ENCODE measurements at regions of chr1 and their contacts with region 1.

Region 1: DNA sequence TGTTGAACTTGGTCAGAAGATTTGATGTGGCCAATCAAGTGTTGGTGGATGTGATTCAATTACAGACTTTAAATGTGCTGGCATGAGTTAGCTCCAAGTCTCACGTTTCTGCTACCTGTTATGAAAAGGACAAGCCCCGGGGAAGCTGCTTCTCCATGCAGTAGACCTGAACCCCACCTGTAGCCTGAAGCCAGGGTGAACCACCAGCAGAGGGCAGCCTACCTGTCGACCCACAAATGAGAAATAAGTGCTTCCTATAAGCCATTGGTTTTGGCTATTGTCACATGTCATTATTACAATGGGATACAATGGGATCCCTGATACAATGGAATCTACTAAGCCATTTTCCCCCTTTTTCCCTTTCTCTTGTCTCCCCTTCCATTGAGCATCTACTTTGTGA is 230.2 kb downstream of the PRDM2 start:
- DNase-seq: peak; percentile 27
- ATAC-seq: peak; percentile 46; the same call in 1 of the 2 replicates
- H3K4me3 ChIP-seq: no peak overlapping the region
- H3K27ac ChIP-seq: no peak overlapping the region
- H3K4me1 ChIP-seq: no peaks in the 10 kb centered on the region
- H3K27me3 ChIP-seq: peaks cover 22% of the 10 kb centered on the region
- CTCF ChIP-seq: peak; percentile 63

Region 2: GRCh38 chr1:13828454-13829151 is 101.5 kb before region 1 on chr1:
- CTCF ChIA-PET with region 1: no interaction called
- POLR2A ChIA-PET with region 1: no interaction called
- intact Hi-C with region 1: no loop called
- DNase-seq: peak; percentile 58
- ATAC-seq: peak; percentile 74
- H3K4me3 ChIP-seq: no peak overlapping the region
- H3K27ac ChIP-seq: no peak overlapping the region
- H3K4me1 ChIP-seq: peaks cover 7% of the 10 kb centered on the region
- H3K27me3 ChIP-seq: no peaks in the 10 kb centered on the region
- CTCF ChIP-seq: peak; percentile 78

Region 3: DNA sequence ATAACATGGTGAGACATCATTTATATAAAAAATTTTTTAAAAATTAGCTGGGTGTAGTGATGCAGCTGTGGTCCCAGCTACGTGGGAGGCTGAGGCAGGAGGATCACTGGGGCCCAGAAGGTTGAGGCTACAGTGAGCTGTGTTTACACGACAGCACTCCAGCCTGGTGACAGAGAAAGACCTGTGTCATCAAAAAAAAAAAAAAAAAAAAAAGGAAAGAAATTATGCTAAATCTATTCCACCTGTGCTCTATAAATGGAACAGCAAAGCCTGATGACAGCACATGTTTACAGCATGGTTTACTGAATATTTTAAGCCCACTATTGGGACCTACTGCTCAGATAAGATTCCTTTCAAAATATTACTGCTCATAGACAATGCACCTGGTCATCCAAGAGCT is 12.5 kb before region 1 on chr1:
- CTCF ChIA-PET with region 1: interaction called, 12 read pairs
- POLR2A ChIA-PET with region 1: no interaction called
- intact Hi-C with region 1: no loop called
- DNase-seq: no peak
- ATAC-seq: no peak
- H3K4me3 ChIP-seq: no peak overlapping the region
- H3K27ac ChIP-seq: no peak overlapping the region
- H3K4me1 ChIP-seq: peaks cover 8% of the 10 kb centered on the region; the same call in 1 of the 2 replicates
- H3K27me3 ChIP-seq: peaks cover 30% of the 10 kb centered on the region
- CTCF ChIP-seq: no peak

Region 4: GRCh38 chr1:13967707-13968106 is 37.6 kb after region 1 on chr1:
- CTCF ChIA-PET with region 1: no interaction called
- POLR2A ChIA-PET with region 1: no interaction called
- intact Hi-C with region 1: no loop called
- DNase-seq: no peak
- ATAC-seq: no peak
- H3K4me3 ChIP-seq: no peak overlapping the region
- H3K27ac ChIP-seq: no peak overlapping the region
- H3K4me1 ChIP-seq: 0 out of 2 replicates have a peak, but pooled peaks cover 5% of the 10 kb centered on the region
- H3K27me3 ChIP-seq: no peaks in the 10 kb centered on the region
- CTCF ChIP-seq: no peak